Activated CD4-positive, alpha-beta memory T cell treated with anti-CD3 and anti-CD28 coated beads for 36 hours (primary cell): ENCODE measurements at regions of chr9 and their contacts with region 1.

Region 1: GRCh38 chr9:19230356-19231125 is at the start of gene DENND4C:
- DNase-seq: peak; percentile 83
- H3K4me3 Mint-ChIP-seq: no peak within 1 kb of the TSS
- H3K27ac Mint-ChIP-seq: peak within 1 kb of the TSS; percentile 62
- H3K4me1 Mint-ChIP-seq: peaks cover 10% of the 10 kb centered on the region
- H3K27me3 Mint-ChIP-seq: no peaks in the 10 kb centered on the region
- total RNA-seq, gene DENND4C: 17.8 to 20.2 TPM

Region 2: GRCh38 chr9:18874069-18874468 is 356.5 kb before region 1 on chr9:
- CTCF ChIA-PET with region 1: no interaction called
- POLR2A ChIA-PET with region 1: no interaction called
- intact Hi-C with region 1: no loop called
- DNase-seq: no peak
- H3K4me3 Mint-ChIP-seq: no peak overlapping the region
- H3K27ac Mint-ChIP-seq: no peak overlapping the region
- H3K4me1 Mint-ChIP-seq: no peaks in the 10 kb centered on the region
- H3K27me3 Mint-ChIP-seq: peaks cover 1% of the 10 kb centered on the region

Region 3: DNA sequence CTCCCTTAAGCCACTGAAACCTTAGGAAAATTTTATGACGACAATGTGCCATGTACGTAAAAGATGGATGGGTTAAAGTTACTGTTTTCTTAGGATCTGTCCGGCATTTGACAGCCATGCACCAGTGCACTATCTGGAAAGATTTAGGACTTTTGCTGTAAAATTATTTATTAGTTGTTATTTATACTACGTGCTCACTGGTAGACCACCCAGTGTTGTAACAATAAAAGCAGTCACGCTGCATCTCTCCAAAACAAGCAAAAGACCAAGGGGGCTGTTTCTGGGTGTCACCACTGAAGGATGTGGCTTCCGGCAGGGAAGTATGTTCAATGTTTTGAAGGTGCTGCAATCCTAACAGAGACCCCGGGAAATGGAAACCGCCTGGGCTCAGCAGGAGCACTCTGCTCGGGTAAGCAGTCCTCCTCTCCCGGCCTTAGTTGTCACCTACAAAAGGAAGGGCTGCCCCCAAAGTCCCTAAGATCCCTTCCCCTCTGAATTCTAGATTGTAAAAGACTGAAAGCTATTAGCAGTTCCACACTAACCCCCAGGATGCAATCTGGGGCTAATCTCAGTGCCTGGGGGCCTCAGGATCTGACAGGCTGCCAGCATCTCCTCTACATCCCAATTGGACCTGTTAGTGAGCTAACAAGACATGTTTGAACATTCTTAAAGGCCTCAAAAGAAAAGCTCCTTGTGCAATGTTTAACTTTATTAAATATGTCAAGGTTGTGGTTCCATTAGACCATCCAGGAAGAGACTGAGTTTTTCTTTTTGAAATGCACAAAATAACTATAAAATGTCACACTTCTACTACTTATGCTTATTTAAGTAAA is 236.1 kb before region 1 on chr9:
- CTCF ChIA-PET with region 1: no interaction called
- POLR2A ChIA-PET with region 1: no interaction called
- intact Hi-C with region 1: no loop called
- DNase-seq: no peak
- H3K4me3 Mint-ChIP-seq: no peak overlapping the region
- H3K27ac Mint-ChIP-seq: no peak overlapping the region
- H3K4me1 Mint-ChIP-seq: no peaks in the 10 kb centered on the region
- H3K27me3 Mint-ChIP-seq: no peaks in the 10 kb centered on the region

Region 4: DNA sequence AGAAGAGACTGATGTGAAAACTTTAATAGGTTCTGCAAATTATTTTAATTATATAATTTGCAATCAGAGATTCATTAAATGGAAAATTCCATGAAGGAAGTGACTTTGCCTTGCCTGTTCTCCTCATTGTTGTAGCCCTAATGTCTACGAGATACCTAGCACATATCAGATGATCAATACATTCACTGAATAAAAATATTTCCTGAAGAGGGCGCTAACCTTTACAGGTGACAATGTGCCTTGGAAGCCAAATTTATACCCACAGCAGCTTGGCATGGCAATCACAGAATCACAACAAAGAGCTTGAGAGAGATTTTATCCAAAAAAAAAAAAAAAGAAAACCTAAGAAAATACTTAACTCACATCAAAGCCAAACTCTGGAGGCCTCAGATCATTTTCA is 145.2 kb before region 1 on chr9:
- CTCF ChIA-PET with region 1: no interaction called
- POLR2A ChIA-PET with region 1: no interaction called
- intact Hi-C with region 1: no loop called
- DNase-seq: no peak
- H3K4me3 Mint-ChIP-seq: no peak overlapping the region
- H3K27ac Mint-ChIP-seq: no peak overlapping the region
- H3K4me1 Mint-ChIP-seq: no peaks in the 10 kb centered on the region
- H3K27me3 Mint-ChIP-seq: no peaks in the 10 kb centered on the region

Region 5: DNA sequence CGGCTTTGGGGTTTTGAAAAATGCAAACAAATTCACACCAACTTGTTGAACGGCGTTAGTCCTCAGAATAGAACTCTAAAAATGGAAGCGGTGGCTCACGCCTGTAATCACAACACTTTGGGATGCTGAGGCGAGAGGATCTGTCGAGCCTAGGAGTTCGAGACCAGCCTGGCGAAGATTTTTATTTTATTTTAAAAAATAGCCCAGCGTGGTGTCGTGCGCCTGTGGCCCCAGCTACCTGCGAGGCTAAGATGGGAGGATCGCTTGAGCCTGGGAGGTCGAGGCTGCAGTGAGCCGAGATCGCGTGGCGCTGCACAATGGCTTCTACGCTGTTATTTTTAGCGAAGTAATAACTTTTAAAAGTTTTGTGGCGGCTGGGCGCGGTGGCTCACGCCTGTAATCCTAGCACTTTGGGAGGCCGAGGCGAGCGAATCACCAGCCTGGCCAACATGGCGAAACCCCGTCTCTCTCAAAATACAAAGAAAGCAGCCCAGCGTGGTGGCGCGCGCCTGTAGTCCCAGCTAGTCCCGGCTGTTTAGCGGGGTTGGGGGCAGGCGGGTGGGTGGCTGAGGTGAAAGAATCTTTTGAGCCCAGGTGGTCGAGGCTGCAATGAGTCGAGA is 102.5 kb before region 1 on chr9:
- CTCF ChIA-PET with region 1: no interaction called
- POLR2A ChIA-PET with region 1: interaction called, 6 read pairs
- intact Hi-C with region 1: loop called (anchors 1 kb)
- DNase-seq: peak; percentile 48
- H3K4me3 Mint-ChIP-seq: peak overlapping the region; percentile 93
- H3K27ac Mint-ChIP-seq: peak overlapping the region; percentile 97
- H3K4me1 Mint-ChIP-seq: peaks cover 56% of the 10 kb centered on the region
- H3K27me3 Mint-ChIP-seq: no peaks in the 10 kb centered on the region

Region 6: GRCh38 chr9:19161257-19162025 is 69.1 kb before region 1 on chr9:
- CTCF ChIA-PET with region 1: no interaction called
- POLR2A ChIA-PET with region 1: no interaction called
- intact Hi-C with region 1: loop called (anchors 2 kb)
- DNase-seq: peak; percentile 73
- H3K4me3 Mint-ChIP-seq: peak overlapping the region; percentile 14
- H3K27ac Mint-ChIP-seq: peak overlapping the region; percentile 76
- H3K4me1 Mint-ChIP-seq: peaks cover 19% of the 10 kb centered on the region
- H3K27me3 Mint-ChIP-seq: no peaks in the 10 kb centered on the region

Region 7: GRCh38 chr9:19271076-19271475 is 40.5 kb after region 1 on chr9:
- CTCF ChIA-PET with region 1: no interaction called
- POLR2A ChIA-PET with region 1: no interaction called
- intact Hi-C with region 1: loop called (anchors 2 kb)
- DNase-seq: no peak
- H3K4me3 Mint-ChIP-seq: no peak overlapping the region
- H3K27ac Mint-ChIP-seq: no peak overlapping the region
- H3K4me1 Mint-ChIP-seq: peaks cover 40% of the 10 kb centered on the region
- H3K27me3 Mint-ChIP-seq: no peaks in the 10 kb centered on the region

Region 8: DNA sequence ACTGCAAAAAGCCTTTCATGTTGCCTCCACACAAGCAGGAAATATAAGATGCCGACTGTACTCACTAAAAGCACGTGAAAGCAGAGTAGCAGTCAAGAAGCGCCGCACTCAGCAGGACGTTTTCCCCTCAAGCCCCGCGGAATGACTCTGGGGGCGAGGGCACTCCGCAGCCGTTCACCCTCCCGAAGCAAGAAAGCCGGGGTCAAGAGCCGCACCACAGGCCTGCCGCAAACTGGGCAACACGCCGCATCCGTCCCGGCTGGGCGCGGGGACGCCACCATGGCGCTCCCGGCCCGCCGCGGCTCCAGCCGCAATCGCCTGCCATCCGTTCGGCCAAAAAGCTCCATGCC is 149.1 kb after region 1 on chr9:
- CTCF ChIA-PET with region 1: no interaction called
- POLR2A ChIA-PET with region 1: interaction called, 21 read pairs
- intact Hi-C with region 1: loop called (anchors 1 kb)
- DNase-seq: no peak
- H3K4me3 Mint-ChIP-seq: peak overlapping the region; percentile 100
- H3K27ac Mint-ChIP-seq: peak overlapping the region; percentile 100
- H3K4me1 Mint-ChIP-seq: peaks cover 50% of the 10 kb centered on the region
- H3K27me3 Mint-ChIP-seq: peaks cover 3% of the 10 kb centered on the region

Region 9: GRCh38 chr9:19441730-19442129 is 211.2 kb after region 1 on chr9:
- CTCF ChIA-PET with region 1: no interaction called
- POLR2A ChIA-PET with region 1: no interaction called
- intact Hi-C with region 1: loop called (anchors 5 kb)
- DNase-seq: no peak
- H3K4me3 Mint-ChIP-seq: peak overlapping the region; percentile 53
- H3K27ac Mint-ChIP-seq: peak overlapping the region; percentile 15
- H3K4me1 Mint-ChIP-seq: peaks cover 15% of the 10 kb centered on the region
- H3K27me3 Mint-ChIP-seq: no peaks in the 10 kb centered on the region